ENCODE measurements at regions of chr22 and their contacts with region 1.

Region 1: GRCh38 chr22:41551877-41552582 is 7.8 kb upstream of the POLR3H start:
- H3K4me3 ChIP-seq: no peak overlapping the region
- H3K27ac ChIP-seq: no peak overlapping the region
- H3K4me1 ChIP-seq: no peaks in the 10 kb centered on the region
- CTCF ChIP-seq: no peak

Region 2: GRCh38 chr22:41429232-41429950 is 122.6 kb before region 1 on chr22:
- CTCF ChIA-PET with region 1: no interaction called
- POLR2A ChIA-PET with region 1: no interaction called
- H3K4me3 ChIP-seq: no peak overlapping the region
- H3K27ac ChIP-seq: no peak overlapping the region; the same call in 1 of the 2 replicates
- H3K4me1 ChIP-seq: peaks cover 4% of the 10 kb centered on the region; the same call in 1 of the 2 replicates
- CTCF ChIP-seq: no peak

Region 3: GRCh38 chr22:41479671-41480396 is 72.2 kb before region 1 on chr22:
- CTCF ChIA-PET with region 1: no interaction called
- POLR2A ChIA-PET with region 1: no interaction called
- H3K4me3 ChIP-seq: no peak overlapping the region
- H3K27ac ChIP-seq: no peak overlapping the region
- H3K4me1 ChIP-seq: no peaks in the 10 kb centered on the region
- CTCF ChIP-seq: no peak

Region 4: DNA sequence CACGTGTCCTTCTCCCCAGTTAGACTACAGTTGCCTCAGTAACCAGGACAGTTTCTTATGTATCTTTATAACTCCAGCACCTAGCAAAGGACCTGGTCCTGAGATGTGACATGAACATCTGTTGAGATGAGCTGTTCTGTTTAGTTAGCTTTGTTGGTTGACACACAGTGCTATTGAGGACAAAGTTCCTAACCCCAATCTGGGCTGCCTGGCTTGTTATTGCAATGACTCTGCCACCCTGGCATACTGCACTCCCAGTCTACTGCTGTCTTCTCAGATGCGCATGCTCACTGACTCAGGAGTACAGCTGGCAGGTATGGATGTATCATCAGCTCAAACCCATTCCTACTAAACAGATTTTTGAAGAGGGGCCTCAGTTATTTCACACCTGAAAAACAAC is 61.4 kb after region 1 on chr22:
- CTCF ChIA-PET with region 1: no interaction called
- POLR2A ChIA-PET with region 1: no interaction called
- H3K4me3 ChIP-seq: no peak overlapping the region
- H3K27ac ChIP-seq: no peak overlapping the region
- H3K4me1 ChIP-seq: no peaks in the 10 kb centered on the region; the same call in 1 of the 2 replicates
- CTCF ChIP-seq: no peak

Region 5: DNA sequence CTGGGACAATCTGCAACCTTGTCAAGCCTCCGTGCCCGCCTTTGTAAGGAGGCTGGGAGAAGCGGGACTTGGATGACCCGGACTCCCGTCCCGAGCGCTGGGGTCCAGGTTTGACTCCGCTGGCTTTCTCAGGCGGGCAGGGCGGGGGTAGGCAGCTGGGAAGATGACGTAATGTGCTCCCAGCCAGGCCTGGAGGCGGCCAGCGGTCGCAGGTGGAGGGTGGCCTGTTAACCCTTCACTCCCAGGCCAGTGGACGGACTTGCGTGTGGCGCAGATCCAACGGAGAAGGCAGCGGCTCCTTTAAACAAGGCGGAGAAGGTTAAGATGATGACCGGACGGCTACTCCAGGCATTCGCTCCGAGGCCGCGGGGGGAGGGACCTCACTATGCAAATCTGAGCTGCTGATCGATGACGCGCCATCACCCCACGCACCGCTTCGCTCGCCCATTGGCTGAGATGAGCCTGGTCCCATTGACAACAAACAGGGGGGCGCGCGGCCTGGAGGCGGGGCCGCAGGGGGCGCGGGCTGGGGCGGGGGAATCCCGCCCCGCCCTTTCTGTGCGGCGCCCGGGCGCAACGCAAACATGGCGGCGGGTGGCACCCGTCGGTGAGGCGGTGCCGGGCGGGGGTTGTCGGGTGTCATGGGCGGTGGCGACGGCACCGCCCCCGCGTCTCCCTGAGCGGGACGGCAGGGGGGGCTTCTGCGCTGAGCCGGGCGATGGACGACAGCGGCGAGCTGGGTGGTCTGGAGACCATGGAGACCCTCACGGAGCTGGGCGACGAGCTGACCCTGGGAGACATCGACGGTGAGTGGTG is 280.7 kb after region 1 on chr22 and contains the start of gene SREBF2:
- CTCF ChIA-PET with region 1: no interaction called
- POLR2A ChIA-PET with region 1: interaction called, 10 read pairs
- H3K4me3 ChIP-seq: peak within 1 kb of the TSS; percentile 96
- H3K27ac ChIP-seq: peak within 1 kb of the TSS; percentile 87
- H3K4me1 ChIP-seq: peaks cover 3% of the 10 kb centered on the region; the same call in 1 of the 2 replicates
- CTCF ChIP-seq: peak; percentile 69

Measured in HEK293 (cell line).